ENCODE measurements at regions of chrX and their contacts with region 1.

Region 1: DNA sequence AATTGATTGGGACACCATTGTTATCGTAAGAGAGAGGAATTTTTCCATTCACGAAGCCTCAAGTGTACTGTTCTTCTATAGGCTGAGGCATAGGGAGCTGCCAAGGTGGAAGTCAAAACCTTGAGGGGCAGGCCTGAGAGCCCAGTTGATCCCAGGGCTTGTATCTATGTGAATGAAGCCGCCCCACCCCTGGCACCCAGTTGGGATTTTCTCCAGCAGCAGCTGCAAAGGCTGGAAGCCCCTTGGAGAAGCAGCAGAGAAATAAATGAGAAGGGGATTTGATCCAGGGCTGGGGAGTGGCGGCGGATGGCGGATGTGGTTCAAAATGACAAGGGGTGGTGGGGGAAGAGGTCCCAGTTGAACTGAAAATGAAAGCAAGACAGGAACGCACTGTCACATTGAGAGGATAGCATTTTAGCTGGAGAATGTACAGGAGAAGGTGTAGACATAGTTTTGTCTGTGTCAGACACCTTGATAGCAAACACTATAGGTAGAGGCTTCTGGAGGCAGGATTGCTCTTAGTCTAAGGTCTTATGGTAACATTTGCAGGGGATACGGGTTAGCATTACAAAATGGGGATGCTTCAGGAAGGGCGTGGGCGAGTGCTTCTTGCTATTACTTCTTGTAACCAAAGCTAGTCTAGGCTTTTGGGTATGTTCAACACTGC is 32.6 kb downstream of the DOCK11 start:
- DNase-seq: peak; percentile 47
- ATAC-seq: peak; percentile 90
- H3K4me3 ChIP-seq: peak overlapping the region; percentile 54
- H3K27ac ChIP-seq: peak overlapping the region; percentile 70
- H3K4me1 ChIP-seq: peaks cover 11% of the 10 kb centered on the region
- H3K27me3 ChIP-seq: no peaks in the 10 kb centered on the region
- CTCF ChIP-seq: no peak
- EP300 ChIP-seq: no peak
- POLR2A ChIP-seq: peak; percentile 65
- RAD21 ChIP-seq: no peak

Region 2: DNA sequence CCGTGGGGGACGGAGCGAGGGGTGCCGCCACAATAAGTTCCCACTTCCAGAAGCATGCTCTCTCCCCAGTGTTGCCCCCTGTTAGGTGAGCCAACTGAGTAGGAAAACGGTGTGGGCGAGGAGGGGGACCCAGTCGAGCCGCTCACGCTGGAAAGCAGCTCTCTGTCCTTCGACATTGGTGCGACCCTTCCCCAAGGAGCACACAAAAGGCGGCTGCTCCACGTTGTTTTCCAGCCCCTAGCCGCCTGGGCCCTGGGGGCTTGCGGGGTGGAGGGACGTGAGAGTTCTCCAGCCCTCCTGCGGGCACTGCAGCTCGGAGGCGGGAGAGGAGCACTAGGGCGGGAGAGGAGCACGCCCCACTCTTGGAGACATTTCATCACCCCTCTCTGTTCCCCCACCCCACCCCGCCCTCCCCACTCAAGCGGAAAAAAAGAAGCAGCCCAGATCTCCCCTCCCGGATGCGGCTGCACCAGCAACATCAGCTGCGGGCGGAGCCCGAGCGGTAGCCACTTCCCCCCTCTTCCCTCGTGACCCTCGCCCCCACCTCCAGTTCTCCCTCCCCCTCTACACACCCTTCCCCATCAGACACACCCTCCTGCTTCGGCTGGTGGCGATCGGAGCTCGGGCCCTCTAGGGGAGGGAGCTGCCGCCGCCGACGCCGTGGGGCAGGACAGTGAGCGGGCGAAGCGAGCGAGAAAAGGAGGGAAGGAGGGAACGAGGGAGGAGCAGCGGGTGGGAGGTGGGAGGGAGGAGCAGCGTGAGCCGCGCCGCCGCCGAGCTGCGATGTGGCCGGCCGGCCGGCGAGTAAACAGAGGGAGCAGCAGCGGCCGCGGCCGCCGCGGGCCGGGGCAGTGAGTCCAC is 32.9 kb before region 1 on chrX and contains the start of gene DOCK11:
- CTCF ChIA-PET with region 1: interaction called, 3 read pairs
- POLR2A ChIA-PET with region 1: interaction called, 39 read pairs
- RAD21 ChIA-PET with region 1: interaction called, 33 read pairs
- SMC1A ChIA-PET with region 1: interaction called, 24 read pairs
- in situ Hi-C with region 1: no loop called
- intact Hi-C with region 1: loop called (anchors 2 kb)
- DNase-seq: peak; percentile 58
- ATAC-seq: peak; percentile 84
- H3K4me3 ChIP-seq: peak within 1 kb of the TSS; percentile 74
- H3K27ac ChIP-seq: peak within 1 kb of the TSS; percentile 66
- H3K4me1 ChIP-seq: 0 out of 2 replicates have a peak, but pooled peaks cover 3% of the 10 kb centered on the region
- H3K27me3 ChIP-seq: no peaks in the 10 kb centered on the region
- CTCF ChIP-seq: no peak
- EP300 ChIP-seq: no peak
- POLR2A ChIP-seq: peak; percentile 82
- RAD21 ChIP-seq: no peak
- polyA plus RNA-seq, gene DOCK11: 17.3 to 27.7 TPM

Region 3: DNA sequence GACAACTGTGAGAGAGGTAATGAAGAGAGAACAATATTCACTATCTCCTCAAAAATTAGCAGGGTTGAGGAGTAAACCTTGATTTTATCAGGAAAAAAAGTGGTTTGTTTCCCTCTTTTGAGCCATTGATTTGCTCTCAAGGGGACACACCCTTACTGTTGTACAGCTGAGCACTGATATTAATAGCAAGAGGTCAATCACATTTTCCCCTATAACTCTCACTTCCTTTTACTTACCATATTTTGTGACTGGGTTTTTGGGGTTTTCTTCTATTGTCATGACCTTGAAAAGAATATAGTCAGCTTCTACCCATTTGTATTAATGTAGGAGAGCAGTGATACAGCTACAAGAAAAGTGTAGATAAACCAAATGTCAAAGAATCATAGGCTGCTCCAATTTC is 376.0 kb after region 1 on chrX:
- CTCF ChIA-PET with region 1: no interaction called
- POLR2A ChIA-PET with region 1: no interaction called
- RAD21 ChIA-PET with region 1: no interaction called
- SMC1A ChIA-PET with region 1: no interaction called
- in situ Hi-C with region 1: no loop called
- intact Hi-C with region 1: no loop called
- DNase-seq: no peak
- ATAC-seq: peak; percentile 74
- H3K4me3 ChIP-seq: no peak overlapping the region
- H3K27ac ChIP-seq: no peak overlapping the region
- H3K4me1 ChIP-seq: no peaks in the 10 kb centered on the region
- H3K27me3 ChIP-seq: no peaks in the 10 kb centered on the region
- CTCF ChIP-seq: no peak
- EP300 ChIP-seq: no peak
- POLR2A ChIP-seq: no peak
- RAD21 ChIP-seq: no peak

Measured in GM12878 (cell line).